Testis (tissue), 5 donors: ENCODE measurements at regions of chrX and their contacts with region 1.

Region 1: GRCh38 chrX:115330498-115331168 is 41.1 kb downstream of the LUZP4 start:
- DNase-seq: peak; percentile 26
- H3K4me3 ChIP-seq: no peak overlapping the region
- H3K27ac ChIP-seq: no peak overlapping the region
- H3K4me1 ChIP-seq: no peaks in the 10 kb centered on the region
- H3K27me3 ChIP-seq: no peaks in the 10 kb centered on the region
- CTCF ChIP-seq: peak; percentile 62 to 84 (median 80)
- POLR2A ChIP-seq: no peak

Region 2: DNA sequence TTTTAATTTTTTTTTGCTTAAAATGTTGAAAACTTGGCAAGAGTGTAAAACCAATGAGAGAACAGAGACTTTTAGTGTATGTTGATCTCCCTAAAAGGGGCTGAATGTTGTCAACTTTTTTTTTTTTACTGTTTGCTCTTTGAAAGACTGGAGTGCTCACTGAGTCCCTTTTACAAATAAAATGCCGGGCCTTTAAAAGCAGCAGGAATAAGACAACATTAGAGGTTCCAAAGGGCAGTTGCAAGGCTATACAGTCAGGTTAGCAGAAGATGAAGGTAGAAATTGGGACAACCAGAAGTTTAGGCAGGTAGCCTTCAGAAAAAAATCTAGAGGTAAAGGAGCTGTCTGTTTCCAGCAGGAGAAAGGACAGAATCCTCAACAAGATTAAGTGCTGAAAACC is 879.2 kb before region 1 on chrX:
- intact Hi-C with region 1: no loop called
- DNase-seq: no peak
- H3K4me3 ChIP-seq: no peak overlapping the region
- H3K27ac ChIP-seq: no peak overlapping the region
- H3K4me1 ChIP-seq: no peaks in the 10 kb centered on the region
- H3K27me3 ChIP-seq: no peaks in the 10 kb centered on the region
- CTCF ChIP-seq: no peak
- POLR2A ChIP-seq: no peak

Region 3: GRCh38 chrX:115630204-115630603 is 299.6 kb after region 1 on chrX:
- intact Hi-C with region 1: loop called (anchors 10 kb)
- DNase-seq: no peak
- H3K4me3 ChIP-seq: no peak overlapping the region
- H3K27ac ChIP-seq: no peak overlapping the region
- H3K4me1 ChIP-seq: no peaks in the 10 kb centered on the region
- H3K27me3 ChIP-seq: no peaks in the 10 kb centered on the region
- CTCF ChIP-seq: no peak
- POLR2A ChIP-seq: no peak